Tibial artery (tissue), 4 donors: ENCODE measurements at regions of chr3 and their contacts with region 1.

Region 1: GRCh38 chr3:86793786-86794185 is 197.2 kb downstream of the VGLL3 start:
- DNase-seq: no peak
- H3K4me3 ChIP-seq: peak overlapping the region in 1 of 2 donors; percentile 28
- H3K27ac ChIP-seq: peak overlapping the region; percentile 79 to 85
- H3K4me1 ChIP-seq: peaks cover 0 to 23% (median 7%) of the 10 kb centered on the region in 4 donors
- H3K27me3 ChIP-seq: no peaks in the 10 kb centered on the region
- CTCF ChIP-seq: no peak

Region 2: DNA sequence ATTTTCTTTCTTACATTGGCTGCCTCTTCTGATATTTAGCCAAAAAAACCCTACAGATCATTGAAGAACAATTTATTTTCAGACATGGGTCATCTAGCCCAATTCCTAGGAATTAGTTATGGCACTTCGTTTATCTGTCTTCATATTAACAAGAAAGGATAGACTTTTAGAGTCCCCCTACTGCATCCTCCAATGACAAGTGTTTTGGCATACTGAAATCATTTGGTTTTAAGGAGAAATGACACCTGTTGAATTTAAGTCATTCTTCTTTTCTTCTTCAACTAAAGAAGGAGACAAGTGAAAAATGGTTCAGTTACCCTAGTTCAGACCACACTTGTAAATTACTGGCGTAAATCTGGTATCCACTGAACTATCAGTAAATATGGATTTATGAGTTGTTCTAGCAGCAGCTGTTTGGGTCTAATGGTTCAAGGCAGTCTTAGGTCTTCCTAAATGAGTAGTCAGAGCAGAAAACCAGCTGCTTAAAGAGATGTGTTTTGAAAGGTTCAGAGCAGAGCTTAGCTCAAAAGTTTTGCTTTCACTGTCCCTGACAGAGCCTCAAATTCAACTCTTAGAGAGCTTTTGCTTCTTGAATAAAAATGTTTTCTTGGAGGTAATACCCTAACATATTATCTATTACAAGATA is 191.5 kb after region 1 on chr3:
- intact Hi-C with region 1: loop called (anchors 1 kb)
- DNase-seq: no peak
- H3K4me3 ChIP-seq: no peak overlapping the region
- H3K27ac ChIP-seq: peak overlapping the region; percentile 70 to 96
- H3K4me1 ChIP-seq: peaks cover 0 to 84% (median 18%) of the 10 kb centered on the region in 4 donors
- H3K27me3 ChIP-seq: no peaks in the 10 kb centered on the region
- CTCF ChIP-seq: no peak